Right ventricle myocardium superior (tissue), 1 donor: ENCODE measurements at regions of chr4 and their contacts with region 1.

Region 1: DNA sequence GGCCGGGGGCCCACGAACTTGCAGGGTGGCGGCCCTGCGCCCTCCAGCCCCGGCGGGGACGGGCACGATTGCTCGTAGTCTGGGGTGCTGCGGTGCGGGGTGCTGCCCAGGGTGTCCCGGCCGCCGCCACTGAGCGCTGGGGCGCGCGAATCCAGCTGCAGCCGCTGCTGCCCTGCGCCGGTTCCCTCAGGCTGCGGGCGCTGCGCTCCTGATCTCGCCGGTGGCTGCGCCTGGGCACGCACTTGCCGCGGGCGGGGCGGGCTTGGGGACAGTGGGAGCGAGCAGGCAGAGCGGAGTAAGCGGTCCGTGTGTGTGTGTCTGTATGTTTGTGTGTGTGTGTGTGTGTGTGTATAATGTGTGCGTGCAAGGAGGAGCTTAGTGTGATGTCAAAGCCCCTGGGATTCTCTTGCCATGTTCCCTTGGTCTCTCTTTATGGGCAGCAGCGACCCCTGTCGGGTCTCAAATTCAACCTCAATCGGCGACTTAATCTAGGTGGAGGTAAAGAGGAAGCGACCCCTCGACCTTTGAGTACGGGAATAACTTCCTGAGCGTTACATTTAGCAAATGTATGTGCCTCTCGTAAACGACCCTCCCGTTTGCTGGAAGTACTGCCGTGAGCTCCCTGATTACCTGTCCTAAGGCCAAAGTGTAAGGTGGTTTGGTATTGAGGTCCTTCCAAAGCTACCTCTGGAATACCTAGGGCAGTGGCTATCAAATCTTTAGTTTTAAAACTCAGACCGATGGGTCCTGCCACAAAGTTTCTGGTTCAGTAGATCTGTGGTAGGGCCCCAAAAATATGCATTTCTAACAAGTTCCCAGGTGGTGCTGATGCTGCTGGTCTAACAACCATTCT is at the start of gene RNF150:
- DNase-seq: peak; percentile 79
- ATAC-seq: peak; percentile 83
- total RNA-seq, gene RNF150: 53.3 TPM

Region 2: GRCh38 chr4:140861359-140862176 is 271.8 kb before region 1 on chr4:
- intact Hi-C with region 1: loop called (anchors 2 kb)
- DNase-seq: no peak
- ATAC-seq: peak; percentile 73

Region 3: DNA sequence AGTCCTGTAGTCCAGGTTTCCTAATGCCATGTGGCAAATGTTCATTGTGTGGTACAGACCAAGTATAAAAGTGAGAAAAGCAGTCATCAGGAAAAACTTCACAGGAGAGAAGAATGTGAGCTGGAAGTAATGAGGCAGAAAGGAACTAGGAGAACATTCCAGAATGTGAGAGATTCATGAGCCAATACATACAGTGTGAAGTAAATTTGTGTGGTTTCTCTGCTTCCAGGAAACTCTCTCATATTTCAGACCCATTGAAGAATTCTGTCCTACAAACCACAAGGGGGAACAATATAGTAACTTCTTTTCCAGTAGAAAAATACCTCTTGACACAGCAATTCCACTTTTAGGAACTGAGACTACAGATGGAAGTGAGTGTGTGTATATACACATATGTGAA is 136.6 kb before region 1 on chr4:
- intact Hi-C with region 1: loop called (anchors 5 kb)
- DNase-seq: no peak
- ATAC-seq: no peak

Region 4: DNA sequence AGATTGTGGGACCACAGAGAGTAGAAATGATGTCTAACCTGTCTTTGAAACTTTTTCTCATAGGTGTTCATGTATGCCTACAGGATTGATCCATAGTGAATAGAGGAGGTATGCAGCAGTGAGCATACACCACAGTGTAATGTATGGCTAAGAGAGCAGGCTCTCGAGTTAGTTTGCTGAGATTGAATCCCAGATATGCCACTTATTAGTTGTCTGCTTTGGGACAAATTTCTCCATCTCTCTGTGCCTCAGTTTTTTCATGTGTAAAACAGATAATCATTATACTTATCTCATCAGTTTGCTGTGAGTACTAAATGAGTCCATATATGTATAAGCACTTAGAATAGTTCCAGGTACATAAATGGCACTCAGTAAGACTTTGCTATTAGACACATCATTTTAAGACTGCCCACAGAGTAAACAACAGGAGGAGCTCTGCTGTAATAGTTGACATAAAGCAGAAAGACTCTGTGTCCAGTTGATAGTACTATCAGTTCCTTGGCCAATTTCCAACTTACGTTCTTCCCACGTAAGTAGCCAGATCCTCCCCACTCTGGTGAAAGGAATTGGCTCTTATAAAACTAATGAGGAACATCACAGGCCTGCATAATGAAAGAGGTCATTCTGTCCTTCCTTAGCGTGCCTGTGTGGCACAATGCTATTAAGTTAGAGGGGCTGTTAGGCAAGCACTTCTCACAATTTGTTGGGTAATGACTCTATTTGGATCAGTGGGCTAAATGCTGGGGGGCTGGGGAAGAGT is 20.6 kb after region 1 on chr4:
- intact Hi-C with region 1: no loop called
- DNase-seq: no peak
- ATAC-seq: peak; percentile 84